Sciatic nerve (tissue), 2 donors: ENCODE measurements at regions of chr2 and their contacts with region 1.

Region 1: DNA sequence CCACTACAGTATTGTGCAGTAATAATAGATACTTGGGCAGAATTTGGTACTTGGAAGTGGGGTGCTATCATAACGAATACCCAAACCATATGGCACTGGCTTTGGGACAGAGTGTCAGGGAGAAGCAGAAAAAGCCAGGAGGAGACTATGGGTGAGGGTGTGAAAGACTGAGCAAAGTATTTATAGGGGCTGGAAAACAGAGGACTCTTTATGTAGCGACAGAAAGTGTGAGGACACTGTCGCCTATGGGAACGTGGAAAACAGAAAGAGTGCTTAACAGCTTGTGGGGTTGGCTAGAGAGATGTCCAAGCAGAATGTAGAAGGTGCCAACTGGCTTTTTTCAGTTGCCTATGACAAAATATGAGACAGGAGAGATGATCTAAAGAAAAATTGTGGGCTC is 40.7 kb upstream of the PLEKHM3 start:
- DNase-seq: no peak
- ATAC-seq: no peak

Region 2: GRCh38 chr2:208049006-208049405 is 17.0 kb before region 1 on chr2:
- intact Hi-C with region 1: loop called (anchors 1 kb)
- DNase-seq: no peak
- ATAC-seq: no peak